ENCODE measurements at regions of chr2 and their contacts with region 1.

Region 1: DNA sequence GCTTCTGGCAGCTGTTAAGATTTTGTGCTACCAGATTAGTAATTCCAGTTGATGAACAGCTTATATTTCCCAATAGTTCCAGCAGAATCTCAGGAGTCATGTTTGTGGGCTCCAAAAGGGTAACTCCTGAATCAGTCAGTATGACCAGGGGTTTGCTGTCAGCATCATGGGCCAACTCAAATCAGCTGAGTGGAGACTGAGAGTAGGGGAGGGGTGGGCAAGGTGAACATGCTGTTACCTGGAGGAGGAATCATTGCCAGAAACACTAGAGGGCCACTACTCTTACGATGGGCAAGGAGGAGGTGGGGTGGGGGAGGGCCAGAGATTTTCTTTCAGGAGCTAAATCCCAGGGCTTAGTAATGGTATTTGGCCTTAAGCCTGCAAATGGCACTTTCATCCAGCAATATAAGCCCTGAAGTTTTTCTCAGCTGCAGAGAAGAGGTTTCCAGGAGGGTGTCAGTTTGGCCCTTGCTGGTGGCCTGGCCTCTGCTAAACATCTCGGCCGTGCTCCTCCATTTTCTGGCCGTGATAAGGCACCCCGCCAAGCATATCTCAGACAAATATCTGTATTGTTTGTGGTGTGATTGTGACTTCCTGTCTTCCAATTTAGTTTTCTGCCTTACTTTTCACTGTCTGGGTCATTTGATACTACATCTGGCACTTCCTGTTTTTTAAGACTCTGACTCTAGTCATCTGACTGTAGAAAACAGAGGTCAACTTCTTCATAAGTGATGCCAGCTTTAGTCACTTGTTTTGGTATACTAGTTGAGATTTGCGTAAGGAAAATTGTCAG is 120.5 kb upstream of the CXCR4 start:
- DNase-seq: peak; percentile 97
- H3K4me3 ChIP-seq: peak overlapping the region; percentile 54
- H3K27ac ChIP-seq: peak overlapping the region; percentile 100
- H3K4me1 ChIP-seq: peaks cover 88% of the 10 kb centered on the region
- CTCF ChIP-seq: peak; percentile 21; the same call in 1 of the 2 replicates

Region 2: GRCh38 chr2:135997380-135997779 is 241.1 kb before region 1 on chr2:
- CTCF ChIA-PET with region 1: interaction called, 5 read pairs
- POLR2A ChIA-PET with region 1: interaction called, 3 read pairs
- intact Hi-C with region 1: loop called (anchors 5 kb)
- DNase-seq: peak; percentile 77
- H3K4me3 ChIP-seq: peak overlapping the region; percentile 30
- H3K27ac ChIP-seq: peak overlapping the region; percentile 58
- H3K4me1 ChIP-seq: peaks cover 55% of the 10 kb centered on the region
- CTCF ChIP-seq: peak; percentile 84

Region 3: DNA sequence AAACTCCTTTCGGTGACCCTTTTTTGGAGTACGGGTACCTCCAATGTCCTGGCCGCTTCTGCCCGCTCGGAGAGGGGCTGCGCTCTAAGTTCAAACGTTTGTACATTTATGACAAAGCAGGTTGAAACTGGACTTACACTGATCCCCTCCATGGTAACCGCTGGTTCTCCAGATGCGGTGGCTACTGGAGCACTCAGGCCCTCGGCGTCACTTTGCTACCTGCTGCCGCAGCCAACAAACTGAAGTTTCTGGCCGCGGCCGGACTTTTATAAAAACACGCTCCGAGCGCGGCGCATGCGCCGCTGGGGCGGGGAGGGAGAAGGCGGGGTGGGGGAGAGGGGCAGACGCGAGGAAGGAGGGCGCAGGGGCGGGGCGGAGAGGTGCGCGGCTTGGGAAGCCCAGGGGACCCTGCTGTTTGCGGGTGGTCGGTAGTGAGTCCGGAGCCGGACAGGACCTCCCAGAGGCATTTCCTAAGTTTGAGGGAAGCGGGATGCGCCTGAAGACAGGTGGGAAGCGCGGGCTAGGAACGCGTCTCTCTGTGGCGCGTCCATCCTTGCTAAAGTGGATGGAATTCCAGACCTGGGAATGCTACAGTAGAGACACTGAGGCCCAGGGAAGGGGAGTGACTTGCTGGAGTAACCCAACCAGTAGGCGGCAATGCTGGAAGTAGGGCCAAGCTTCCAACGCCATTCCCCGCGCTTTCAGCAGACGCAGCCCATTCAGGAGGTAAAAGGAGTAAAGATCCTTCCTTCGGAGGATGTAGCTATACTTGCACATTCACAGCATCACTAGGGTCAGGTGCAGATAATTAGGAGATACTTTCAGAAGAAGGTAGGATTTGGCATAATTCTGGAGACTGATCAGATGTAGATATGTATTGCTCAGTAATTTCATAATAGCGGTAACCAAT is 120.3 kb before region 1 on chr2 and contains the start of gene CXCR4:
- CTCF ChIA-PET with region 1: no interaction called
- POLR2A ChIA-PET with region 1: interaction called, 10 read pairs
- intact Hi-C with region 1: loop called (anchors 1 kb)
- DNase-seq: peak; percentile 89
- H3K4me3 ChIP-seq: peak within 1 kb of the TSS; percentile 92
- H3K27ac ChIP-seq: peak within 1 kb of the TSS; percentile 92
- H3K4me1 ChIP-seq: peaks cover 66% of the 10 kb centered on the region
- CTCF ChIP-seq: peak; percentile 33; the same call in 1 of the 2 replicates
- total RNA-seq, gene CXCR4: 367 and 432 TPM in 2 replicates

Region 4: GRCh38 chr2:136217996-136218395 is 20.5 kb before region 1 on chr2:
- CTCF ChIA-PET with region 1: interaction called, 5 read pairs
- POLR2A ChIA-PET with region 1: interaction called, 115 read pairs
- intact Hi-C with region 1: no loop called
- DNase-seq: no peak
- H3K4me3 ChIP-seq: no peak overlapping the region
- H3K27ac ChIP-seq: no peak overlapping the region
- H3K4me1 ChIP-seq: peaks cover 47% of the 10 kb centered on the region
- CTCF ChIP-seq: no peak

Region 5: DNA sequence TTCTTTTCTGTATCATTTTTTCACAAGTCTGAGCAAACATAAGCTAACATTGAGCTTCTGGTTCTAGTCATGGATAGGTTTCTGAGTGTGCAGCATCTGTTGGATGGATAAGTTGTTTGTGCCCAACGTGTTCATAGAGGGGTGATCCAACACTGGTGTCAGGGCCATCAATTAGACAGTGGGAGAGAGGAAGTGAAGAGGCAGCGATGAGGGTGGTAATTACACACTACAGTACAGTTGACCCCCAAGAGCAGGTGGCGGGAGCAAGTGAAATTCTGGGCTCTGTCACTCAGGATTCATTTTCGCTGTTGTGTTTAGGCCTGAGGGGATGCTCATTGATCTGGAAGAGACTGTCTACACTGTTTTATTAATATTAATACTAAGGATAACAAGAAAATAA is 59.5 kb after region 1 on chr2:
- CTCF ChIA-PET with region 1: no interaction called
- POLR2A ChIA-PET with region 1: no interaction called
- intact Hi-C with region 1: no loop called
- DNase-seq: no peak
- H3K4me3 ChIP-seq: no peak overlapping the region
- H3K27ac ChIP-seq: no peak overlapping the region
- H3K4me1 ChIP-seq: no peaks in the 10 kb centered on the region
- CTCF ChIP-seq: no peak

Region 6: GRCh38 chr2:136327162-136327852 is 88.8 kb after region 1 on chr2:
- CTCF ChIA-PET with region 1: no interaction called
- POLR2A ChIA-PET with region 1: interaction called, 8 read pairs
- intact Hi-C with region 1: loop called (anchors 2 kb)
- DNase-seq: peak; percentile 78
- H3K4me3 ChIP-seq: peak overlapping the region; percentile 63
- H3K27ac ChIP-seq: peak overlapping the region; percentile 81
- H3K4me1 ChIP-seq: peaks cover 74% of the 10 kb centered on the region
- CTCF ChIP-seq: no peak; the same call in 1 of the 2 replicates

Region 7: DNA sequence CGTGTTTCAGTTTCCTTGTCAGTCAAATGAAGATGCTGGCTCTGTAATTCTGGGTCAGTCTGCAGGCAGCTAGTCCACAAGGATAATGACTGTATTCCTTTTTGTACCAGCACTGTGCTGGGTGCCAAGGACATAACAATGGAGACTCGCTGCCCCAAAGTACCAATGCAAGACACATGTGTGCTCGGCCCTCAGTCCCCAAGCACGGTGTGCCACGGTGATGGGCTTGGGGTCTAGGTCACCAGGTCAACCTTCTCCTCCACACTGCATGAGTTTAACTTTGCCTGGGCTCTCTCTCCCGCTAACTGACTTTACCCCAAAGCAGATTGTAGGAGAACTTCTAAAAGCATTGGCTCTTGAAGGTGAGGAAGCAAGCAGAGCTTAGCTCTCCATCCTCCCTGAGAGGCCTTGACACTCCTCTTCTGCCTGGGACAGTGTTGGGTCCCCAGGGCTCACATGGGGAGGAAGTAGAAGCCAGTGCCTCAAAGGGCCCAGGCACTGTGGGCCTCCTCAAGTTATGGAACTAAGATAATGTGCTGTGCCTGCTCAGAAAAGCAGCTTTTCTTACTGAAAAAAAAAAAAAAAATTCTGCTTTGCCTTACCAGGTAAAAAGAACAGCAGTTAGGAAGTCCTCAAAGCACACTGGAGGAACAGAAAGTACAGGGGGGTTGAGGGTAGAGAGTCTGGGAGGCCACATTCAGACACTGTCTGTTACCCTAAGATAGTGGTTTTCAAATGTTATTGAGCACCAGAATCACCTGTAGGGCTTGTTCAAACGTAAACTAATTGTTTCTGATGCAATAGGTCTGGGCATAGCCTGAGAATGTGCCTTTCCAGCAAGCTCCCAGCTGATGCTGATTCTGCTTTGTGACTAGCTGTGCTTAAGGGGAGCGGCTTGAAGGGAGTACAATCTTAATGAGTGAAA is 155.9 kb after region 1 on chr2:
- CTCF ChIA-PET with region 1: no interaction called
- POLR2A ChIA-PET with region 1: interaction called, 30 read pairs
- intact Hi-C with region 1: no loop called
- DNase-seq: peak; percentile 89
- H3K4me3 ChIP-seq: peak overlapping the region; percentile 11
- H3K27ac ChIP-seq: peak overlapping the region; percentile 98
- H3K4me1 ChIP-seq: peaks cover 94% of the 10 kb centered on the region
- CTCF ChIP-seq: no peak